CD14-positive monocyte (primary cell): ENCODE measurements at regions of chr22 and their contacts with region 1.

Region 1: DNA sequence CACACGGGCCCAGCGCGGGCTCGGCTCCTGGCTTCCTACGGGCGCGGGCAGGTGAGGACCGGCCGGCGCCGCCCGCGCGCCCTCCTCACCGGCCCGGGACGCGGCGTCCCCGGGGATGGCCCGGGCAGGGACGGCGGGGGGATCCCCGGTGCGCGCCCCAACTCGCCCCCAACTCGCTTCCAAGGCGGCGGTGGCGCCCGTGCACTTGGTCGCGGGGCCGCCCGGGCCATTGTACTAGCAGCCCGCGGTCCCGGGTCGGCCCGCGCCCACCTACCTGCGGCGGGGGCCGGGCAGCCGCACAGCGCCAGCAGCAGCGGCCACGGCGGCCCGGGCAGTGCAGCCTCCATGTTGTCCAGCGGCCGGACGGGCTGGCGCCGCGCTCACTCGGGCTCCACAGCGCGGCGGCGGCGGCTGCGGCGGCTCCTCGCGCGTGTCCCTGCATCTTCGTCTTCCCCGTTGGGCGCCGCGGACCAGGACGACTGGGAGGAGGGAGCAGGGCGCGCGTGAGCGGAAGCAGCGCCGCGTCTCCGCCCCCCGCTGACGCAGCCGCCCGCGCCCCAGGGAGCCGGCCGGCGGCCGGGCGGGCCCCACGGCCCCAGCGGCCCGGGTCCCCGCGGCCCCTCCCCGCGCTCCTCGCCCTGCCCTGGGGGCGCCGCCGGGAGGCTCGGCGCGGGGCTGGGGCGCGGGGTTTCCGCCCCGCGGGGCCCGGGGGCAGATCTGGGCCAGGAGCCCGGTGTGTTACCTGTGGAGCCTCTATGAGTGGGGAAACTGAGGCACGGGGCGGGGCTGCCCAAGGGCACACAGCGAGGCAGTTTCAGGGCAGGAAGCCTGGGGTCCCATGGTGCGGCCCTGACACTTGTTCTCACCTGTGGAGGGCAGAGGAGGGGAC is 159.3 kb upstream of the GRK3 start:
- DNase-seq: peak; percentile 74 to 82 (median 76)
- H3K4me3 ChIP-seq: peak overlapping the region; percentile 56 to 86 (median 69)
- H3K4me3 Mint-ChIP-seq: peak overlapping the region; percentile 76 to 77
- H3K27ac ChIP-seq: peak overlapping the region; percentile 73 to 95
- H3K27ac Mint-ChIP-seq: peak overlapping the region; percentile 38 to 93 (median 89)
- H3K4me1 ChIP-seq: peaks cover 44 to 53% of the 10 kb centered on the region in 2 donors
- H3K4me1 Mint-ChIP-seq: peaks cover 57% of the 10 kb centered on the region
- H3K27me3 ChIP-seq: no peaks in the 10 kb centered on the region
- H3K27me3 Mint-ChIP-seq: peaks cover 3 to 12% (median 5%) of the 10 kb centered on the region in 3 donors
- CTCF ChIP-seq: no peak

Region 2: DNA sequence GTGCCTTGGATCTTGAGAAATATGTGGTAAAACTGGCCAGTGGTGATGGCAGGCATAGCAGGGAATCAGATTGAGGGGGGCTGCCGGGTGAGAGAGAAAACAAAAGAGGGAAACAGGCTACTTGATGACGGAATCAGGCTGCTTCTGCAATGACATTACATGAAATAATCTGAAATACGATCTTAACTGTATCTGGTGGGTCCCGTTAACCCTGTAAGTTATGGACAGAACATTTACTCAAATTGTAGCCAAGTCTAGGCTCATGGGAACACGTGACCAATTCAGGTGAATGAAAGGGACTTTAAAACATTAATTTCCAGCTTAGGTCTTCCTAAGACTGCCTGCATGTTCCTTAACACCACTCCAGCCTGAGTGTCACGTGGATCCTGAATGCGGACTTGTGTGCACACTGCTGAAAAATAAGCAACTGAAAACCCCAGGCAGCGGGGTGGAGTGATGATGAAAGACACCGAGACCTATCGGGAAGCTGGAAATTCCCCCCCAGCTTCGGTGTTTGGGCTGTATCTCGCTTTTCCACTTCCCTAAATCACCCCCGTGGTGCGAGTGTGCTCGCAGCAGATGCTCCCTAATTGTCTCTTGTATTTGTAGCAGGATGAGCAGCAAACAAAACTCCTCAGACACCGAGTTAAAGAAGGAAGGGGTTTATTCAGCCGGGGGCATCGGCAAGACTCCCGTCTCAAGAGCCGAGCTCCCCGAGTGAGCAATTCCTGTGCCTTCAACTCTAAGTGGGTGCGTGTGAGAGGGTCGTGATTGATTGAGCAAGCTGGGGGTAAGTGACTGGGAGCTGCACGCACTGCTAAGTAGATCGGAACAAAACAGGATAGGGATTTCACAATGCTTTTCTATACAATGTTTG is 14.3 kb after region 1 on chr22:
- intact Hi-C with region 1: loop called in 1 of 2 experiments (anchors 2 kb)
- DNase-seq: peak; percentile 89 to 99 (median 93)
- H3K4me3 ChIP-seq: peak overlapping the region; percentile 15 to 74 (median 49)
- H3K4me3 Mint-ChIP-seq: peak overlapping the region; percentile 80 to 98
- H3K27ac ChIP-seq: peak overlapping the region; percentile 51 to 88
- H3K27ac Mint-ChIP-seq: peak overlapping the region; percentile 85 to 98 (median 93)
- H3K4me1 ChIP-seq: peaks cover 38 to 42% of the 10 kb centered on the region in 2 donors
- H3K4me1 Mint-ChIP-seq: peaks cover 38% of the 10 kb centered on the region
- H3K27me3 ChIP-seq: peaks cover 13 to 26% of the 10 kb centered on the region in 2 donors
- H3K27me3 Mint-ChIP-seq: peaks cover 28 to 37% (median 36%) of the 10 kb centered on the region in 3 donors
- CTCF ChIP-seq: no peak